ENCODE measurements at regions of chr17 and their contacts with region 1.

Region 1: DNA sequence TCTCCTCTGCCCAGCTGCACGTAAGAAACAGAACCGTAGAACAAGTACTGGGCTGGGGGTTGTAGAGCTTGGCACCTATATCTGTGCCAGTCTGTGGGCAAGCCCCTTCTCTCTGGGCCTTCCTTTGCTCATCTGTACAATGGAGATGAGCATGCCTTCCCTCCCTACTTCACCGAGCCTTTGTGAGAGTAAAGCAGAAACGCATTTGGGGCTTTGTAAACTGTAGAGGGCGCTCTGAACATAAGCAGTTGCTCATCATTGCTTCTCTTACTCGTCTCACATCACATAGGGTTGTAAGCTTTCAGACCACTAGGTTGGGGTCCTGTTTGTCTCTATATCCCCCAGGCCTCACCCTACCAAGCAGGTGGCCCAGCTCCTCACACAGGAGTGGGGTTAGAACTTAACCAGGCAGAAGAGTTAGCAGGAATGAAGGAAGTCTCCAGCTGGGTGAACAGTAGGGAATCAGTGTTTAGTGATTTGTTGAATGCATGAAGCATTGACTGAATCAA is 15.1 kb downstream of the SAMD14 start:
- DNase-seq: peak in 6 of 14 experiments; percentile 22 to 71 (median 50)
- ATAC-seq: peak; percentile 45
- H3K4me3 ChIP-seq: no peak overlapping the region
- H3K4me3 Mint-ChIP-seq: no peak overlapping the region
- H3K27ac ChIP-seq: no peak overlapping the region
- H3K27ac Mint-ChIP-seq: no peak overlapping the region
- H3K4me1 ChIP-seq: peaks cover 11% of the 10 kb centered on the region
- H3K4me1 Mint-ChIP-seq: peaks cover 13% of the 10 kb centered on the region
- H3K27me3 ChIP-seq: peaks cover 13 to 20% of the 10 kb centered on the region in 2 experiments
- H3K27me3 Mint-ChIP-seq: peaks cover 39% of the 10 kb centered on the region
- CTCF ChIP-seq: peak; percentile 33

Region 2: GRCh38 chr17:50184064-50184463 is 69.2 kb after region 1 on chr17:
- CTCF ChIA-PET with region 1: no interaction called
- POLR2A ChIA-PET with region 1: no interaction called
- intact Hi-C with region 1: no loop called
- DNase-seq: no peak
- ATAC-seq: peak; percentile 34
- H3K4me3 ChIP-seq: peak overlapping the region; percentile 24
- H3K4me3 Mint-ChIP-seq: peak overlapping the region; percentile 49
- H3K27ac ChIP-seq: no peak overlapping the region
- H3K27ac Mint-ChIP-seq: peak overlapping the region; percentile 32
- H3K4me1 ChIP-seq: peaks cover 17% of the 10 kb centered on the region
- H3K4me1 Mint-ChIP-seq: peaks cover 15% of the 10 kb centered on the region
- H3K27me3 ChIP-seq: no peaks in the 10 kb centered on the region
- H3K27me3 Mint-ChIP-seq: no peaks in the 10 kb centered on the region
- CTCF ChIP-seq: peak; percentile 11

Region 3: DNA sequence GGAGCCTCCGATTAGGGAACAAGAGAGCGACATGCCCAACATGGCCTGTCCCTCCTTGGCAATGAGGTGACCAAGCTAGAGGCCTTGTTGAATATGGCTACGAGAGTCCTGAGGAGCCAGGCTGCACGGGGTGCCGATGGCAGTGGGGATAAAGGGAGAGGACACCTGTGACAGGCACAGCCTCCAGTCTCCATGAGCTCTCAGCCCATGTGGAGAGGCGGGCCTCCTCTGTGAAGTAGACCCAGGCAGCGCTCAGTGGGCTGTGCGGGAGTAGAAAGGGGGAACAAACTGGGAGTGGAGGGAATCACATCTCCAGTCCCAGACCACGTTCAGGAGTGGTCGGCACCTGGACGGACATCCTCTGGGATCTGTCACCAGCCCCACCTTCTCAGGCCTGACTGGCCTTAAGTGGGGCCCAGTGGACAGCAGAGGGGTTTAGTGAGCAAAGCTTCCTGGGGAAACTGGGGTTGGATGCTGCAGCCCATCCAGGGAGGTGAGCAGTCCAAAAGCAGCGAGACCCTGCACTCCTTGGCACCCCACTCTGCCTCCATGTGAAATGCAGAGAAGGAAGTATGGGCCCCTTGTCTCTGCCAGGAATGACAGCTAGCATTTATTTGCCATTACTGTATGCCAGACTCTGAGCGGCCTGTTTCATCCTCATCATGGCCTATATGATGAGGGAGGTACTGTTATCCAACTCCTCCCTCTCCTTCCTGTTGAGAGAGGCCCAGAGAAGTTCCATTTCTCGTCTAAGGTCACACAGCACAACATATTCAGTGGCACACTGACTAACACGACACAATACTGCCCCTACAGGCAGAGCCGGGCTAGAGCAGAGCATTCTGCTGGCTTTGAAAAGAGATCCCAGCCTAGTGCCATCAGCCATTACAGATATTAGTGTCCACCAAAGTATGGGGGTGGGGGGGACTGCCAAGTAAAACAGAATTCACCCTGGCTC is 154.9 kb after region 1 on chr17:
- CTCF ChIA-PET with region 1: interaction called, 3 read pairs
- POLR2A ChIA-PET with region 1: no interaction called
- intact Hi-C with region 1: loop called in 1 of 2 experiments (anchors 5 kb)
- DNase-seq: peak; percentile 30 to 73 (median 45)
- ATAC-seq: peak; percentile 83
- H3K4me3 ChIP-seq: no peak overlapping the region
- H3K4me3 Mint-ChIP-seq: no peak overlapping the region
- H3K27ac ChIP-seq: no peak overlapping the region
- H3K27ac Mint-ChIP-seq: no peak overlapping the region
- H3K4me1 ChIP-seq: peaks cover 13% of the 10 kb centered on the region
- H3K4me1 Mint-ChIP-seq: peaks cover 6% of the 10 kb centered on the region
- H3K27me3 ChIP-seq: peaks cover 17 to 20% of the 10 kb centered on the region in 2 experiments
- H3K27me3 Mint-ChIP-seq: peaks cover 23% of the 10 kb centered on the region
- CTCF ChIP-seq: peak; percentile 68

Region 4: GRCh38 chr17:50297407-50297865 is 182.5 kb after region 1 on chr17:
- CTCF ChIA-PET with region 1: interaction called, 4 read pairs
- POLR2A ChIA-PET with region 1: no interaction called
- intact Hi-C with region 1: loop called in 1 of 2 experiments (anchors 5 kb)
- DNase-seq: peak; percentile 67 to 85 (median 72)
- ATAC-seq: peak; percentile 100
- H3K4me3 ChIP-seq: no peak overlapping the region
- H3K4me3 Mint-ChIP-seq: no peak overlapping the region
- H3K27ac ChIP-seq: no peak overlapping the region
- H3K27ac Mint-ChIP-seq: no peak overlapping the region
- H3K4me1 ChIP-seq: no peaks in the 10 kb centered on the region
- H3K4me1 Mint-ChIP-seq: no peaks in the 10 kb centered on the region
- H3K27me3 ChIP-seq: peaks cover 0 to 3% of the 10 kb centered on the region in 2 experiments
- H3K27me3 Mint-ChIP-seq: peaks cover 16% of the 10 kb centered on the region
- CTCF ChIP-seq: peak; percentile 84